ENCODE measurements at regions of chr1 and their contacts with region 1.

Region 1: GRCh38 chr1:158124999-158125398 is 55.7 kb upstream of the CD1D start:
- DNase-seq: peak; percentile 91
- ATAC-seq: peak; percentile 97

Region 2: DNA sequence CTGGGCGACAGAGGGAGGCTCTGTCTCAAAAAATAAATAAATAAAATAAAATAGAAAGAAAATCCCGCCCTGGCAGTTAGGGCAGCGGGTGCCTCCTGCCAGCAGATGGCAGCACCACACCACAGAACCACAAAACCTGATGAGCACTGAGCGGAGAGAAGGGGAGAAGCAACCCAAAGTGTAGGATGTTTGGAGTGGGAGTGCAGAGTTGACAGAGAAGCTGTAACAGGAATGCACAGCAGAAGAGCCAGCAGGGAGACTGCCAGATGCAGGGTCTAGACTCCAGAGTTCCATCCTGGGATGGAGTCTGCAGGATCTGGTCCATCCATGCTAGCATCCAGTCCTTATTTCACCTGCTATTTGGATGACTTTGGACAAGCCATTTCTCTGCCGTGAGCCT is 161.3 kb before region 1 on chr1:
- intact Hi-C with region 1: loop called (anchors 5 kb)
- DNase-seq: peak; percentile 83
- ATAC-seq: peak; percentile 92